A549 (cell line): ENCODE measurements at regions of chr9 and their contacts with region 1.

Region 1: GRCh38 chr9:134449221-134449894 is 123.1 kb downstream of the RXRA start:
- DNase-seq: peak; percentile 92 to 98
- ATAC-seq: peak; percentile 92 to 97
- H3K4me3 ChIP-seq: no peak overlapping the region
- H3K27ac ChIP-seq: peak overlapping the region in 1 of 2 experiments; percentile 65; a peak in 2 of 6 replicates
- H3K4me1 ChIP-seq: peaks cover 9% of the 10 kb centered on the region
- CTCF ChIP-seq: peak; percentile 81
- EP300 ChIP-seq: no peak
- POLR2A ChIP-seq: no peak
- RAD21 ChIP-seq: peak; percentile 97 to 99

Region 2: DNA sequence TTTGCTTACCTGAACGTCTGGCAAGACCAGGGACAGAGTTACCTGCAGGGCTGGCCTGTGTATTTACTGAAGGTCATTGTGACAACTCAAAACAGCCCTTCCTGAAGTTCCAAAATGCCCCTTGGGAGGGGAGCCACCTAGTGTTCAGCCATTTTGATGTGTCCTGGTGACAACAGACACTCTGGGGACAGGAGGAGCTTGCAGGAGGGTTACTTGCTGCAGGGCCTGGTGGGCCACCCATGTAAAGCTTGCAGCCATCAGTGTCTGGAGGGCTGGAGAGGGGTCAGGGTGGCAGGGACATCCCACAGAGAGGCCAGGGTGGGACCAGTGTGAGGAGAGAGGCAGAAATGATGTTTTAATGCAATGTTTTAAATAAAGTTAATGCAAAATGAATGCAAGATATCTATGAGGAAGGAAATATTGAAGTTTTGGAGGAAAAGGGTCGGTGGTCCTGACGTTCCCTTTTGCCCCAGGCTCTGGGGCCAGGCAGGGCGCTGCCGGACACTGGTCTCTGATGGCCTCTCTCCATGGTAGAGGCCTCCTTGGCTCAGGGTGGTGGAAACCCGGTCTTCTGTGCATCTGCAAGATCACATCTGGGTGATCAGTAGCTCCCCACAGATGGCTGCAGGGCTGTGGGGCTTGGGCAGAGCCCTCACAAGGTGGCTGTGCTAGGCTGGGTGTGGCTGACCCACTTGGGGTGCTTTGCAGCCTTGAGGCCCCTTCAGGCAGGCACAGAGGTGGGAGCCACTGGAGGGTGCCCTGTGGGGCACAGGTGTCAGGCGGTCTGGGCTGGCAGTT is 231.3 kb before region 1 on chr9:
- CTCF ChIA-PET with region 1: no interaction called
- POLR2A ChIA-PET with region 1: no interaction called
- DNase-seq: peak in 1 of 2 experiments; percentile 43
- ATAC-seq: peak; percentile 28 to 35; a peak in 2 of 6 replicates
- H3K4me3 ChIP-seq: no peak overlapping the region
- H3K27ac ChIP-seq: no peak overlapping the region
- H3K4me1 ChIP-seq: no peaks in the 10 kb centered on the region
- CTCF ChIP-seq: peak; percentile 24; the same call in 1 of the 3 replicates
- EP300 ChIP-seq: no peak
- POLR2A ChIP-seq: no peak
- RAD21 ChIP-seq: peak in 1 of 2 experiments; percentile 24; a peak in 1 of 5 replicates

Region 3: GRCh38 chr9:134502809-134503211 is 53.5 kb after region 1 on chr9:
- CTCF ChIA-PET with region 1: interaction called, 24 read pairs
- POLR2A ChIA-PET with region 1: no interaction called
- DNase-seq: peak; percentile 87 to 98
- ATAC-seq: peak; percentile 100
- H3K4me3 ChIP-seq: no peak overlapping the region
- H3K27ac ChIP-seq: peak overlapping the region; percentile 92 to 93
- H3K4me1 ChIP-seq: peaks cover 19% of the 10 kb centered on the region
- CTCF ChIP-seq: no peak
- EP300 ChIP-seq: peak in 1 of 2 experiments; percentile 20; a peak in 1 of 5 replicates
- POLR2A ChIP-seq: peak; percentile 24; the same call in 1 of the 2 replicates
- RAD21 ChIP-seq: peak in 1 of 2 experiments; percentile 32; a peak in 2 of 5 replicates

Region 4: DNA sequence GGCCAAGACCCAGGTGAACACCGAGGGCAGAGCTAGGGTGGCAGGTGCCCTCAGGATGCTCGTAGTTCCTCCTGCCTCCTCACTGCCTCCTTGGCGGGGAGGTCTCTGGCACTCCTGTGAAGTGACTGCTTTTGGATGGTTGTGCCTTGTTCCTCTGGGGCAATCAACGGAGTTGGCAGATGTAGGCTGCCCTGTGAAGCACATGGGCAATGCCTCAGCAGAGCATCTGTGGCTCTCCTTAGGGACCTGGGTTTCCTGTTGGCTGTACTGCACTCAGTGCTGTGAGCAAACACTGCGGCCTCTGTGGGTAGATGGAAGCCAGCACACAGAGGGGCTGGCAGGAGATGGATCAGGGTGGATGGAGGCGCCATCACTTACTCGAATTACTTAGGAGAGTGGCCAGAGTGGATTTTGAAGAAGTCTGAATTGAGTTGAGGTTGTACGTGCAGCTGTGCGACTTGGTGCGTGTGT is 120.8 kb after region 1 on chr9:
- CTCF ChIA-PET with region 1: interaction called, 15 read pairs
- POLR2A ChIA-PET with region 1: no interaction called
- DNase-seq: no peak
- ATAC-seq: peak; percentile 25 to 36; a peak in 3 of 6 replicates
- H3K4me3 ChIP-seq: no peak overlapping the region
- H3K27ac ChIP-seq: no peak overlapping the region
- H3K4me1 ChIP-seq: no peaks in the 10 kb centered on the region
- CTCF ChIP-seq: no peak
- EP300 ChIP-seq: no peak
- POLR2A ChIP-seq: no peak
- RAD21 ChIP-seq: no peak

Region 5: GRCh38 chr9:134633362-134634150 is 184.2 kb after region 1 on chr9:
- CTCF ChIA-PET with region 1: interaction called, 52 read pairs
- POLR2A ChIA-PET with region 1: no interaction called
- DNase-seq: no peak
- ATAC-seq: no peak
- H3K4me3 ChIP-seq: no peak overlapping the region
- H3K27ac ChIP-seq: peak overlapping the region in 1 of 2 experiments; percentile 32; a peak in 1 of 6 replicates
- H3K4me1 ChIP-seq: peaks cover 15% of the 10 kb centered on the region; the same call in 2 of the 3 replicates
- CTCF ChIP-seq: no peak
- EP300 ChIP-seq: no peak
- POLR2A ChIP-seq: no peak
- RAD21 ChIP-seq: no peak

Region 6: GRCh38 chr9:134689321-134690181 is 240.2 kb after region 1 on chr9:
- CTCF ChIA-PET with region 1: interaction called, 70 read pairs
- POLR2A ChIA-PET with region 1: no interaction called
- DNase-seq: peak; percentile 59 to 82
- ATAC-seq: peak; percentile 89 to 98
- H3K4me3 ChIP-seq: no peak overlapping the region
- H3K27ac ChIP-seq: peak overlapping the region; percentile 17 to 64; a peak in 3 of 6 replicates
- H3K4me1 ChIP-seq: peaks cover 10% of the 10 kb centered on the region
- CTCF ChIP-seq: peak; percentile 59
- EP300 ChIP-seq: no peak
- POLR2A ChIP-seq: no peak
- RAD21 ChIP-seq: peak; percentile 42 to 44

Region 7: GRCh38 chr9:134778841-134779411 is 329.6 kb after region 1 on chr9:
- CTCF ChIA-PET with region 1: interaction called, 14 read pairs
- POLR2A ChIA-PET with region 1: no interaction called
- DNase-seq: peak; percentile 64 to 65
- ATAC-seq: peak; percentile 79 to 93
- H3K4me3 ChIP-seq: no peak overlapping the region
- H3K27ac ChIP-seq: 0 out of 6 replicates have a peak overlapping the region, but pooled peaks of 1 of the 2 experiments have one; percentile 25
- H3K4me1 ChIP-seq: peaks cover 25% of the 10 kb centered on the region
- CTCF ChIP-seq: peak; percentile 70
- EP300 ChIP-seq: no peak
- POLR2A ChIP-seq: no peak
- RAD21 ChIP-seq: peak; percentile 58 to 62